Body of pancreas (tissue), 4 donors: ENCODE measurements at regions of chrX and their contacts with region 1.

Region 1: DNA sequence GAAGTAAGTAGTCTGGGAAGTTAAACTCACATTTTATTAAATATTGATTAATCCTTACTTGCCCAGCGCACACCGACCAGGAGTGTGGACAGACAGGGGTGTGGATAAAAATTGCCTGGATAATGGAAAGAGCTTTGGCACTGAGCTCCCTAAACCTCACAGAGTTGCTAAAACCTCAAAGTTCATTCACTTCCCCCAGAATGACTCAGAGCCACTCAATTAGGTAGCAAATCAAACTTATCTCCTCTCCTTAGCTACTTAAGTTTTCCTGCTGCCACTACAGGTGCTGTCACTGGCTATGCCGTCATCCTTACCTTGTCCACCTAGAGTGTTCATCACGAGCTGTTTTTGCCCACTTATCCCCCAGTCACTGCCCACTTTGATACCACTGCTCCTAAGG is 27.0 kb upstream of the MID1IP1 start:
- DNase-seq: no peak
- ATAC-seq: no peak
- H3K4me3 ChIP-seq: no peak overlapping the region
- H3K27ac ChIP-seq: no peak overlapping the region
- H3K4me1 ChIP-seq: no peaks in the 10 kb centered on the region
- H3K27me3 ChIP-seq: no peaks in the 10 kb centered on the region
- CTCF ChIP-seq: no peak
- POLR2A ChIP-seq: no peak

Region 2: DNA sequence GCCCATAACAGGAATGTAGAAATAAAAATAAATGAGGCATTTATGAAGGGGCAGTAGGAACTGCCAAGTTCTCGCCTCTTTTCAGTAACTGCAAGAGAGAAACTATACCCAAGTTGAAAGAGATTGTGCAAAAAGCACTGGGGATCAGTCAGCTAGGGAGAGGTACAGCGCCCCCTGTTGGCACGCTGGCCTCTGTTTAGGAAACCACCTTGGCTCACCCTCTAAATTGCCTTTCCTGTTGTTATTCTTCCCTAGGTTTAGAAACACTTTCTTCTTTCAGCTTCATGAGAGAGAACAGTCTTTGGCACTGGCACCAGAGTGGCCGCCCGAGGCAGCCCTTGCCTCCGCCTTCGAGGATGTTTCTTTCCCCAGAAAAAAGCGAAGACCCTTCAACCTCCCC is 375.5 kb after region 1 on chrX:
- intact Hi-C with region 1: loop called (anchors 10 kb)
- DNase-seq: peak; percentile 77 to 89 (median 81)
- ATAC-seq: peak; percentile 75
- H3K4me3 ChIP-seq: no peak overlapping the region
- H3K27ac ChIP-seq: no peak overlapping the region
- H3K4me1 ChIP-seq: peaks cover 17% of the 10 kb centered on the region
- H3K27me3 ChIP-seq: no peaks in the 10 kb centered on the region
- CTCF ChIP-seq: peak; percentile 52 to 73 (median 63)
- POLR2A ChIP-seq: no peak